Activated naive CD4-positive, alpha-beta T cell treated with anti-CD3 and anti-CD28 coated beads for 36 hours (primary cell): ENCODE measurements at regions of chr4 and their contacts with region 1.

Region 1: DNA sequence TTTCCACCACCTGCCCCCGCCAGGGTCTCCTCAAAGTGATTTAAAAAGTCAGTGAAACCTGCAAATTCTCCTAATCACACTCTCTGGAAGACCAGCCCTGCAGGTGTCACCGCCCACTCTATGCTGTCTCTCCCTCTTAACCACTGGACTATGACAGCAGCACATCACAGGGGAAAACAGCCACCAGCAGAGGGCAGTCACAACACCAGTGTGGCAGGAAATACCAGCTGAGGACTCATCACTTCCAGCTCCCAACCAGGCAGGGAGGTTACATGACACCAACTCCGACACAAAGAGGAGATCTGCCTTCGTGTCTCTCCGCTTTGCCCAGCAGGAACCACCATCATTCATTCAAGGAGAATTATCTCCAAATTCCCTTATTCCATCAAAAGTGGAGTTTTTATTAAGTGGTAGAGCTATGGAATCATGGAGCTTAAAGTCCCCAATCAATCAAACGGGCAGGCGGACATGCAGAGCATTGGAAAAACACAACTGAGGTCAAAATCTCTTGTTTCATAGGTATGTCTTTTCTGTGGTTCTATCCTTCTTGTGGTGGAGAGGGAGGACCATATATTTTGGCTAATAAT is 91.3 kb downstream of the NSUN7 start:
- DNase-seq: peak; percentile 93
- H3K4me3 Mint-ChIP-seq: no peak overlapping the region
- H3K27ac Mint-ChIP-seq: peak overlapping the region; percentile 47
- H3K4me1 Mint-ChIP-seq: peaks cover 5% of the 10 kb centered on the region
- H3K27me3 Mint-ChIP-seq: no peaks in the 10 kb centered on the region

Region 2: DNA sequence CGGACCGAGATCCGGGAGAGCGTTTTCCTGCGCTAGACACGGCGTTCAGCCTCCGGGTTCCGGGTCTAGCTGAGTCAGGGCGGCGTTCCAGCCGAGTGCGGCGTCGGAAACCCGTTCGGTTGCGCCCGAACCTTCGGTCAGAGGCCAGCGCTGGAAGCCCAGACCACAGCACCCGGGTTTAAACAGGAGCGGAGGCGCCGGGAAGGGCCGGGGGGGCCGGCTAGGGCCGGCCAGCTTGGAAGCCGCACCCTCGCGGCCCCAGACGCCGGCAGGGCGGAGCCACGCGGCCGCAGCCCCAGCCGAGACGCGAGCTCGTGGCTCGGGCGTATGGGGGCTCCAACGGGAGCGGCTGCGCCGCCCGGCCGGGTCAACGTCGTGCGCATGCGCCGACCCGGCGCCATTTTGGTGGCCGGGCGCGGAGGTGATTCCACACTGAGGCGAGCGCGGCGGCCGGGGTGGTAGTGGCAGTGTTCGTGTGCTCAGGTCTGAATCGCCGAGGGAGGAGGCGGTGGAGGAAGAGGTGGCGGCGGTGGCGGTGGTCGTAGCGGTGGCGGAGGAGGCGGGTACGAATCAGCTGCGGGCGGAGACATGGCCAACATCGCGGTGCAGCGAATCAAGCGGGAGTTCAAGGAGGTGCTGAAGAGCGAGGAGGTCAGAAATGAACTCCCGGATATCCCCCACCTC is 1143.2 kb before region 1 on chr4 and contains the start of gene UBE2K:
- CTCF ChIA-PET with region 1: no interaction called
- intact Hi-C with region 1: loop called (anchors 5 kb)
- DNase-seq: peak; percentile 85
- H3K4me3 Mint-ChIP-seq: peak within 1 kb of the TSS; percentile 98
- H3K27ac Mint-ChIP-seq: peak within 1 kb of the TSS; percentile 98
- H3K4me1 Mint-ChIP-seq: peaks cover 32% of the 10 kb centered on the region
- H3K27me3 Mint-ChIP-seq: no peaks in the 10 kb centered on the region
- total RNA-seq, gene UBE2K: 60.6 to 69.5 TPM

Region 3: GRCh38 chr4:40325189-40326019 is 515.7 kb before region 1 on chr4:
- CTCF ChIA-PET with region 1: interaction called, 3 read pairs
- intact Hi-C with region 1: loop called (anchors 5 kb)
- DNase-seq: peak; percentile 82
- H3K4me3 Mint-ChIP-seq: no peak overlapping the region
- H3K27ac Mint-ChIP-seq: no peak overlapping the region
- H3K4me1 Mint-ChIP-seq: peaks cover 27% of the 10 kb centered on the region
- H3K27me3 Mint-ChIP-seq: no peaks in the 10 kb centered on the region

Region 4: GRCh38 chr4:40731792-40732245 is 109.3 kb before region 1 on chr4:
- CTCF ChIA-PET with region 1: interaction called, 17 read pairs
- intact Hi-C with region 1: loop called (anchors 1 kb)
- DNase-seq: peak; percentile 35
- H3K4me3 Mint-ChIP-seq: no peak overlapping the region
- H3K27ac Mint-ChIP-seq: no peak overlapping the region
- H3K4me1 Mint-ChIP-seq: peaks cover 12% of the 10 kb centered on the region
- H3K27me3 Mint-ChIP-seq: no peaks in the 10 kb centered on the region

Region 5: GRCh38 chr4:40825014-40825838 is 15.9 kb before region 1 on chr4:
- CTCF ChIA-PET with region 1: interaction called, 19 read pairs
- intact Hi-C with region 1: no loop called
- DNase-seq: no peak
- H3K4me3 Mint-ChIP-seq: no peak overlapping the region
- H3K27ac Mint-ChIP-seq: no peak overlapping the region
- H3K4me1 Mint-ChIP-seq: no peaks in the 10 kb centered on the region
- H3K27me3 Mint-ChIP-seq: no peaks in the 10 kb centered on the region

Region 6: GRCh38 chr4:40897557-40898203 is 56.6 kb after region 1 on chr4:
- CTCF ChIA-PET with region 1: interaction called, 11 read pairs
- intact Hi-C with region 1: loop called (anchors 1 kb)
- DNase-seq: peak; percentile 79
- H3K4me3 Mint-ChIP-seq: peak overlapping the region; percentile 62
- H3K27ac Mint-ChIP-seq: peak overlapping the region; percentile 59
- H3K4me1 Mint-ChIP-seq: peaks cover 4% of the 10 kb centered on the region
- H3K27me3 Mint-ChIP-seq: no peaks in the 10 kb centered on the region

Region 7: DNA sequence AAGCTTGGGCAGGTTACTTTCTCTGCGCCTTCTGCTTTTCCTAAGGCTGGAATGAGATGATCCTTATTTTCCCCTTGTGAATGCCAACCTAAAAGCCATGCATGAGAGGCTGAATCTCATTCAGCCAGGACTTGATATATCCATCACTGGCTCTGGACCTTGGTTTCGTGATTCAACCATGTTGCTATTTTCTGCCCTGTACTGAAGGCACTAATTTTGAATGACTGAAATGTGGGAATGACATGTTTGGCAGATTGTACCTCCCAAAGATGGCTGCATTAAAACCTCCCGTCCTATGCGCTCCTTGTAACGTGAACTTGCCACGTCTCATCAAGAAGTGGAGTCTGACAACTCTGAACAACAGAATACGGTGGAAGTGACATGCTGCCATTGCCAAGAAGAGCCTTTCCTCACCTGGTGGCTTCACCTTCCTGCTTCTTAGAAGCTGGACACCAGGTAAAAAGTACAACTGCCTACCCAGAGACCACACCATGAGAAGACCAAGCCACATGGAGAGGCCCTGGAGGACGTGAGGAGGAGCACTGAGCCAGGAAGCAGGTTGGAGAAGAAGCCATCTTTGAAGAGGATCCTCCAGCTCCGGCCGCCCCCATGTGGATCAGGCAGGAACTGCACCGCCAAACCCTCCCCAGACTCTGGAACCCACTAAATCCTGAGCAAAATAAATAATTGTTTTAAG is 83.2 kb after region 1 on chr4:
- CTCF ChIA-PET with region 1: interaction called, 16 read pairs
- intact Hi-C with region 1: loop called (anchors 1 kb)
- DNase-seq: peak; percentile 92
- H3K4me3 Mint-ChIP-seq: no peak overlapping the region
- H3K27ac Mint-ChIP-seq: peak overlapping the region; percentile 72
- H3K4me1 Mint-ChIP-seq: peaks cover 10% of the 10 kb centered on the region
- H3K27me3 Mint-ChIP-seq: peaks cover 11% of the 10 kb centered on the region

Region 8: DNA sequence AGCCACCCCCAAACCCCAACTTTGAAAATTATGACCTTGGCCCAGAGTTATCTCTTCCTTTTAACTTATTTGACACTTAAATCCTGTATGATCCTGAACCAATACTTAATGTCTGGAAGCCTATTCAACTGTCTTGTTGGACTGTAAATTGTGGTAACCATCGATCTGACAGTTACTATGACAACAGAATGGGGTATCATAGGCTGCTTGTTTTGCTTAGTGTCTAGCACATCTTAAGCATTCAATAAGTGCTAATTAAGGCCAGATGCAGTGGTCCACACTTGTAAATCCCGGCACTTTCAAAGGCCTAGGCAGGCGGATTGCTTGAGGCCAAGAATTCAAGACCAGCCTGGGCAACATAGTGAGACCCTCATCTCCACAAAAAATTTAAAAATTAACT is 198.2 kb after region 1 on chr4:
- CTCF ChIA-PET with region 1: no interaction called
- intact Hi-C with region 1: no loop called
- DNase-seq: no peak
- H3K4me3 Mint-ChIP-seq: no peak overlapping the region
- H3K27ac Mint-ChIP-seq: no peak overlapping the region
- H3K4me1 Mint-ChIP-seq: no peaks in the 10 kb centered on the region
- H3K27me3 Mint-ChIP-seq: peaks cover 6% of the 10 kb centered on the region